MCF 10A (cell line): ENCODE measurements at regions of chr11 and their contacts with region 1.

Region 1: GRCh38 chr11:57530596-57531507 is at the start of gene TIMM10:
- DNase-seq: peak; percentile 98
- H3K4me3 Mint-ChIP-seq: peak within 1 kb of the TSS; percentile 96
- H3K27ac Mint-ChIP-seq: peak within 1 kb of the TSS; percentile 79
- H3K4me1 Mint-ChIP-seq: peaks cover 11% of the 10 kb centered on the region
- H3K27me3 Mint-ChIP-seq: peaks cover 8% of the 10 kb centered on the region
- CTCF ChIP-seq: no peak
- total RNA-seq, gene TIMM10: 52.2 and 80.3 TPM in 2 replicates

Region 2: GRCh38 chr11:57049749-57050148 is 481.1 kb before region 1 on chr11:
- CTCF ChIA-PET with region 1: no interaction called
- POLR2A ChIA-PET with region 1: no interaction called
- intact Hi-C with region 1: no loop called
- DNase-seq: no peak
- H3K4me3 Mint-ChIP-seq: no peak overlapping the region
- H3K27ac Mint-ChIP-seq: no peak overlapping the region
- H3K4me1 Mint-ChIP-seq: no peaks in the 10 kb centered on the region
- H3K27me3 Mint-ChIP-seq: no peaks in the 10 kb centered on the region
- CTCF ChIP-seq: no peak

Region 3: GRCh38 chr11:57345555-57346211 is 185.2 kb before region 1 on chr11:
- CTCF ChIA-PET with region 1: interaction called, 47 read pairs
- POLR2A ChIA-PET with region 1: no interaction called
- intact Hi-C with region 1: loop called (anchors 1 kb)
- DNase-seq: peak; percentile 85
- H3K4me3 Mint-ChIP-seq: no peak overlapping the region
- H3K27ac Mint-ChIP-seq: no peak overlapping the region
- H3K4me1 Mint-ChIP-seq: no peaks in the 10 kb centered on the region
- H3K27me3 Mint-ChIP-seq: no peaks in the 10 kb centered on the region
- CTCF ChIP-seq: peak; percentile 90

Region 4: DNA sequence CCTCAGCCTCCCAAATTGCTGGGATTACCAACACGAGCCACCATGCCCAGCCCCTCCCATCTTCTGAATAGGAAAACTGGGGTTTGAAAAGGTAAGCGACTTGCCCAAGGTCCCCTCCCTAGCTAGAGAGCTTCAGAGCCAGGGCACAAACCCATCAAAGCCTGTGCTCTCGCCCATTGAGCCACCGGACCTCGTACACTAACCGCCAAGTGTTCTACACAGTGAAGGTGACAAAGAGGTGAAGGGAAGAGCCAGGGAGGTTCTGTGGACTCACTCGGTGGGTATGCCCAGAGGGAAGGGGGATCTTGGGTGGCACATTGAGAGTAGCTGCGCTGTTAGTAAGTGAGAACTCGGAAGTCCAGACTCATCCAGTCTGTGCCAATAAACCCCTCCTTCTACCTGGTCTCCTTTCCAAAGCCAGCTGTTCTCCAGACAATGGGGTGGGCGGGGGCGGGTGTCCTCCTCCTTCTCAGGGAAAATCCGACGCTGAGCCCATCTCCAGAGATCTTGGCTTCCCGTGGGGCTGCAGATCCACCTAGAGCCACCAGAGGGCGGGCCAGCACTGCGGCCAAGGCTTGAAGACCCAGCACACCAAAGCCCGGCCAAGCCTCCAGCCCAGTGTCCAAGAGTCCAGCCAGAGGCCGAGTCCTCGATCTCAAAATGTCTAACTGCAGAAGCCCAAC is 73.8 kb before region 1 on chr11:
- CTCF ChIA-PET with region 1: interaction called, 254 read pairs
- POLR2A ChIA-PET with region 1: interaction called, 8 read pairs
- intact Hi-C with region 1: loop called (anchors 1 kb)
- DNase-seq: peak; percentile 82
- H3K4me3 Mint-ChIP-seq: peak overlapping the region; percentile 39
- H3K27ac Mint-ChIP-seq: no peak overlapping the region
- H3K4me1 Mint-ChIP-seq: peaks cover 27% of the 10 kb centered on the region
- H3K27me3 Mint-ChIP-seq: peaks cover 34% of the 10 kb centered on the region
- CTCF ChIP-seq: peak; percentile 98

Region 5: GRCh38 chr11:57487920-57488659 is 42.8 kb before region 1 on chr11:
- CTCF ChIA-PET with region 1: interaction called, 212 read pairs
- POLR2A ChIA-PET with region 1: interaction called, 5 read pairs
- intact Hi-C with region 1: loop called (anchors 1 kb)
- DNase-seq: no peak
- H3K4me3 Mint-ChIP-seq: no peak overlapping the region
- H3K27ac Mint-ChIP-seq: no peak overlapping the region
- H3K4me1 Mint-ChIP-seq: peaks cover 13% of the 10 kb centered on the region
- H3K27me3 Mint-ChIP-seq: peaks cover 10% of the 10 kb centered on the region
- CTCF ChIP-seq: no peak

Region 6: GRCh38 chr11:57508341-57509170 is 22.3 kb before region 1 on chr11:
- CTCF ChIA-PET with region 1: interaction called, 70 read pairs
- POLR2A ChIA-PET with region 1: interaction called, 3 read pairs
- intact Hi-C with region 1: no loop called
- DNase-seq: no peak
- H3K4me3 Mint-ChIP-seq: no peak overlapping the region
- H3K27ac Mint-ChIP-seq: no peak overlapping the region
- H3K4me1 Mint-ChIP-seq: no peaks in the 10 kb centered on the region
- H3K27me3 Mint-ChIP-seq: no peaks in the 10 kb centered on the region
- CTCF ChIP-seq: no peak

Region 7: DNA sequence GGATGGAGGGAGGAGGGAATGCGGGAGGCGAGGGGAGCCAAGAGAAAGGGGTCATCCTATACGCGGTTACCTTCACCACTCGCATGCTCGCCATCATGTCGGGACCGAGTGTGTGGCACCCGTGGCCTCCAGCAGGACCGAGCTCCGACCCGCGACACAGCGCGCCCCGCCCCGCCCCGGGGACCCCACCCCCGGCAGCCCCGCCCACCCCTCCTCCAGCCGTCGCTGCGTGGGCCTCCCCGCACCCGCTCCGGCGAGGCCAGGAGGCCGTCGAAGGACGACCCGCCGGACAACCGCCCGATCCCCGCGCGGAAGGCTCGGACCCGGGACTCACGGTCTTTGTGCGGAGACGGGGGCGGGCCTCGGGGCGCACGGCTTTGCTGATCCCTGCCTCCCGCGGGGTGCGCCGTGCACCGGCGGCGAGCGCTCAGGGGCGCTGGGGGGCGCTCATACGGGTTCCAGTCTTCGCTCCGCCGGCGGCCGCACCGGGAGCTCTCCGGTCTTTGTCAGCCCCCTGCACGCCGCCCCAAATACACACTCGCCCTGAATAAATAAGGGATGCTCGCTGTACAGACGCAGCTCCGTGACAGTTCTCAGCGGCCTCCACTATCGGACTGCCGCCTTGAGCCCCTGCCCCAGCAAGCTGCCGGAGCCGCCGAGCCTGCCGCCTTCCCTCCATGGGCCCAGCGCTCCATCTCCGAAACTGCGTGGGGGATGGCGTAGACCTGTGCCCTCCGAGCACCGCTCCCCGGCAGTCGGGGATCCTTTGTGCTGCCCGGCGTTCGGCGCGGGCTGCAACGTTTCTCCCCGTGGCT is 36.9 kb after region 1 on chr11 and contains the start of gene UBE2L6:
- CTCF ChIA-PET with region 1: interaction called, 14 read pairs
- POLR2A ChIA-PET with region 1: interaction called, 10 read pairs
- intact Hi-C with region 1: loop called (anchors 2 kb)
- DNase-seq: peak; percentile 34
- H3K4me3 Mint-ChIP-seq: peak within 1 kb of the TSS; percentile 94
- H3K27ac Mint-ChIP-seq: peak within 1 kb of the TSS; percentile 63
- H3K4me1 Mint-ChIP-seq: peaks cover 34% of the 10 kb centered on the region
- H3K27me3 Mint-ChIP-seq: no peaks in the 10 kb centered on the region
- CTCF ChIP-seq: no peak
- total RNA-seq, gene UBE2L6: 17.0 and 17.3 TPM in 2 replicates

Region 8: GRCh38 chr11:57868491-57868890 is 337.6 kb after region 1 on chr11:
- CTCF ChIA-PET with region 1: no interaction called
- POLR2A ChIA-PET with region 1: no interaction called
- intact Hi-C with region 1: no loop called
- DNase-seq: no peak
- H3K4me3 Mint-ChIP-seq: no peak overlapping the region
- H3K27ac Mint-ChIP-seq: no peak overlapping the region
- H3K4me1 Mint-ChIP-seq: peaks cover 14% of the 10 kb centered on the region
- H3K27me3 Mint-ChIP-seq: no peaks in the 10 kb centered on the region
- CTCF ChIP-seq: no peak

Region 9: DNA sequence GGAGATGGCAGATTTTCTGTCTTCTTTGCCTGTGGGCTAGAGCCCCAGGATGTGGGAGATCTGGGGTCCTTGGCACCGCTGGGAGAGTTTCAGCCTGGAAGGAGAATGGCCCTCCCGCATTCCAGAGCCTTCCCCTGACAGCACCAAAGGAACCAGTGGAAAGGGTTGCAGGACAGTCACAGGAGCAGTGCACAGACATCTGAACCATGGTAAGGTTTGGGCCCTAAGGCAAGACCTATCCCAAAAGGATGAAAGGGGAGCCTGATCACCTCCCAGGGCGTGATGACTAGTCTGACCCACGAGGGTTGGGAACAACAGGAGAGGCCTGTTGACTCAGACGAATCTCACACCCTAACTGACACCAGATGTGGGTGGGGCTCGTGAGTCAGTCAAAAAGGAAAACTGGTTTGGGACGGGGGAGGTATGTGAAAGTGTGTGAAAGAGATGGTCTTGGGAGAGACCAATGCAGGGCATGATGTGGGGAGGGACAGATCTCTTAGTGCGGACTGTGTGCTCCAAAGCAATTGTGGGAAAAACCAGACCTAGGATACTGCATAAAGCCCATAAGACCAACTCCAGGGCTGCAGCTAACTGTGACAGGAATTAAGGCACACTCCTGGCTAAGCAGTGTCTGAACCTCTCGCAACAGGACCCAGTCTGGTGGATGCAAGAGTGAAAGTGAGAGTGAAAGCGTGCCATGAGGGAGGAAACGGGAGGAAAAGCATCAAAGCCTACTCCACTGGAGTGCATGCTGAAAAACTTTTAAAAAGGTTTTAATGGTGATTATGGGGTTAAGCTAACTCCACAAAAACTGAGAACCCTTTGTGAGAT is 1240.0 kb after region 1 on chr11:
- CTCF ChIA-PET with region 1: no interaction called
- POLR2A ChIA-PET with region 1: no interaction called
- intact Hi-C with region 1: no loop called
- DNase-seq: peak; percentile 95
- H3K4me3 Mint-ChIP-seq: peak overlapping the region; percentile 46
- H3K27ac Mint-ChIP-seq: peak overlapping the region; percentile 53
- H3K4me1 Mint-ChIP-seq: peaks cover 23% of the 10 kb centered on the region
- H3K27me3 Mint-ChIP-seq: no peaks in the 10 kb centered on the region
- CTCF ChIP-seq: no peak